GM10248 (cell line): ENCODE measurements at regions of chr10 and their contacts with region 1.

Region 1: DNA sequence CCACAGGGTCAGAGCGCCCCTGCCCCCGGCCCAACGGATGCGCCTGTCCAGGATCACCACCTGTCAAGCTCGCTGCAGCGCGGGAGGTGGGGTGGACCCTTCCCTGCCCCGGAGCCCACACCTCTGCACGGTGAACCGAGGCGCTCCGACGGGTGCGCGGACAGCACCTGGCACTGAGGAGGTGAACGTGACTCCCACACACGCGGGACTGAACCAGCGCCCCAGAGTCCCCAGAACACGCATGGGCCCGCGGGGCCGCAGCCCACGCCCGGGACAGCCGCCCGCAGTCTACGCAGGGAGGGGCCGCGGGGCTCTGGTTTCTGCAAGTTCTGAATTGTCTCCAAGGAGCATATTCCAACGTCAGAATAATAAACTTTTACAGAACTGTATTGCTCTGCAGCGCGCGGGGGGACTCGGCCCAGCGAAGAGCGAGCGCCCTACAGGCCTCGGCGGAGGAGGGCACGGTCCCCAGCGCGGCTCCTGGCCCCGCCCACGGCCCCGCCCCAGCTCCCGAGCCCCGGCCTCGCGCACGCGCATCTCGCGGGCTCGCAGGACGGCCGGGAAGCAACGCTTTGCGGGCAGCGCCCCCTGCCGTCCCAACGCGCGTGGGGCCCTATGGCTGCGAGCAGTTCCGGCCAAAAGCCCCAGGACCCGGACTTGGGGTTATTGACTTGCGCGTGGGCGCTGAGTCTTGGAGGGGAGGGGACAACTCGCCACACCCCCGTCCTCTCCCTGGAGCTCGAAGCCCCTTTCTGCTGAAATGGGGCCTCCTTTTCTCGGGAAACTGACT is 29.7 kb downstream of the OAT start:
- DNase-seq: peak; percentile 99
- CTCF ChIP-seq: peak; percentile 96

Region 2: GRCh38 chr10:123986742-123987141 is 402.3 kb before region 1 on chr10:
- CTCF ChIA-PET with region 1: interaction called, 11 read pairs
- POLR2A ChIA-PET with region 1: no interaction called
- DNase-seq: no peak
- CTCF ChIP-seq: no peak

Region 3: DNA sequence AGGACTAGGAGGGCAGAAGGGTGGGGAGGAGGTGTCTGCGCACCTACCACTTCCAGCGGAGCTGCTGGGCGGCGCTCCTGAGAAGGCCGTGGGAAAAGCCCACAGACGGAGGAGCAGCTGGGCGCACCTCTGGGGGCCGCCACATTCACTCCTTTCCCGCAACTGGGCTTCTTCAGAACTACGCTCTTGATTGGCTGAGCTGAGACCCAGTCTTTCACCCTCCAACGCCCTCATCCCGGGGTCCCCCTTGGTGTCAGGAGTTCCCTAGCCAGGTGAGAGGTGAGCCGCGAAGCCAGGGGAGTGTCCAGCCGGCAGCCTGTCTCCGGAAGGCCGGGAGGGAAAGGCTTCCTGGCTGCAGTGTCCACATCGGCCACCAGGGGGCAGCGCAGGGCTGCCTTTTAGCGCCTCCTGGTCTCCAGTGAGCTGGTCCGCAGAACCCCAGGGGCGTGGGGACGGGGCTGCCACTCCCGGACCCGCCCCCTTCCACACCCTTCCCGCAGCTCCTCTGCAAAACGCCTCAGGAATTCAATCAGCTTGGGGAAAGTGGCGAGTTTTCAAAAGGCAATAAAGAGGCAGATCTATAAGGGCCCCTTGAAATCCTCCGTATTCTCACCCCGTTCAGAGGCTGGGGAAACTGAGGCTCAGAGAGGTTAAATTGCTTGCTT is 394.5 kb before region 1 on chr10:
- CTCF ChIA-PET with region 1: interaction called, 341 read pairs
- POLR2A ChIA-PET with region 1: no interaction called
- DNase-seq: peak; percentile 89
- CTCF ChIP-seq: peak; percentile 98

Region 4: GRCh38 chr10:124403548-124403947 is 14.5 kb after region 1 on chr10:
- CTCF ChIA-PET with region 1: interaction called, 44 read pairs
- POLR2A ChIA-PET with region 1: no interaction called
- DNase-seq: peak; percentile 70
- CTCF ChIP-seq: peak; percentile 68